Aorta (tissue), 5 donors: ENCODE measurements at regions of chr11 and their contacts with region 1.

Region 1: DNA sequence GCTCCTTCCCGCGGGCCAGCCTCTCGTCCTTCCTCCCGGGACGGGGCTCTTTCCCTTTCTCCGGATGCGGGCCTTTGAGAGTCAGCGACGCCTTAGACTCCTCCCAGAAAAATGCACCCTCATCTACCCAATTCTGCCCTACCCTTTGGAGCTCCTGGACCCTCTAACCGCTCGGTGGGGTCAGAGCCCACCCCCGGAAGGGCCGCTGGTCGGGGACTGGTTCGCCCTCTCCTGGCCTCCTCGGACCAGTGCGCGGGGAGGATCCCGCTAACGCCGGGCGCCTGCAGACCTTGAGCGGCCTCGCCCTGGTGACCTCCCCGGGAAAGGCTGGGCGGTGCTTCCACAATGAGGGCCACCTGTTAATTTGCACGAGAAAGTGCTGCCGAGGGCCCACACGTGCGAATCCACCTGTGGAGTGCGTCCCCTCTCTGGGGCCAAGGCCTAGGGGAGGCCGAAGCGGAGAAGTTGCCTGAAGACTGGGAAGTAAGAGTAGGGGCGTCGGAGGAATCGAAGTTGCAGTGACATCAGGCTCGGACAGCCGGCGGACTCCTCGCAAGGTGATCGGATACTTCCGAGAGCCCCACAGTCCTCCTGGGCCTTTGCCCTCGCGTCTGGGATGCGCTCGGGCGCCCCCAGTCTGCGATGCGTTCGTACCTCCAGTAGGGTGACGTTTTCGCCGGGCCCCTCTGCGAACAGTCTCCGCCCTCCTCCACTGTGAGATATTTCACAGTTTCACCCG is 61.5 kb downstream of the ENDOD1 start:
- DNase-seq: peak; percentile 94 to 95
- ATAC-seq: peak; percentile 95
- H3K4me3 ChIP-seq: peak overlapping the region; percentile 7 to 32
- H3K27ac ChIP-seq: peak overlapping the region in 1 of 2 donors; percentile 82
- H3K4me1 ChIP-seq: no peaks in the 10 kb centered on the region
- H3K27me3 ChIP-seq: no peaks in the 10 kb centered on the region

Region 2: DNA sequence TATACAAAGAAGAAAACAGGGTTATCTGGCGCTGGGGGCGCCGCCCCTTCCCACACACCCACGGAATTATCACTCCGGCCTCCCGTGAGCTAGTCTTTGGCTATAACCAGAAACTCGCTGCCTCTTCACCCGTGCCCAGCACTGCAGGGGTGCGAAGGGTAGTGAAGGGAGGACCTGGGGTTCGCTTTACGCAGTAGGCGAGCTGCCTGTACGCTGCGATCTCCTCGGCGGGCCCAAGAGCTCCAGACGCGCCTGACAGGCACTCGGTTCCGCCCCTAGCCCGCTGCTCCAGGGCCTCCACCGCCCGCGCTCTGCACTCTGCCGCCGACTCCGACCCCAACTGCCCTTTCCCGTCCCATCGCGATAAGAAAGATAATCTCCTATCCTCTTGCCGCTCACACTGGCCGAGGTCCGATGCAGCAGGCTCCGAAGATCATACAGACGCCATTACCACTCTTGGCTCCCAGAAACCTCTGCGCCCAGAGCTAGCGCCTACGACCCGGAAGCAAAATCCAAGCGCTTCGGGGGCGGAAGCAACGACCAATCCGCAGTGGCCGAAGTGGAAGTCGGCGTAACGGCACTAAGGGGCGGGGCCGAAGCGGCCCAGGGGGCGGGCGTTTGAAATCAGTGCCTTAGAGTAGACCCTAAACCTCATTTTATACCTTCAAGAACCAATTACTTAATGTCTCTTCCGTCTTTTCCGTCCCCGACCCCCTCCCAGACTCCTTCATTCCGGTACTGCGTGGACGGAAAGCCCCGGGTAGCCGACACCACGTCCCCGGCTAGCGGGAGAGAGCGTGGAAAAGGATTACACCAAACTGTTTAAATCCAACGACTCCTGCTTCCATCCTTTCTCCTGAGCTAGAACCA is 177.8 kb before region 1 on chr11 and contains the starts of genes CWC15 and KDM4D:
- intact Hi-C with region 1: loop called (anchors 10 kb)
- DNase-seq: peak; percentile 97 to 98
- ATAC-seq: peak; percentile 99
- H3K4me3 ChIP-seq: peak within 1 kb of the TSS; percentile 71 to 96
- H3K27ac ChIP-seq: peak within 1 kb of the TSS in 1 of 2 donors; percentile 70
- H3K4me1 ChIP-seq: no peaks in the 10 kb centered on the region
- H3K27me3 ChIP-seq: no peaks in the 10 kb centered on the region
- total RNA-seq, gene CWC15: 49.7 to 54.7 TPM
- total RNA-seq, gene KDM4D: 0.45 to 0.75 TPM

Region 3: DNA sequence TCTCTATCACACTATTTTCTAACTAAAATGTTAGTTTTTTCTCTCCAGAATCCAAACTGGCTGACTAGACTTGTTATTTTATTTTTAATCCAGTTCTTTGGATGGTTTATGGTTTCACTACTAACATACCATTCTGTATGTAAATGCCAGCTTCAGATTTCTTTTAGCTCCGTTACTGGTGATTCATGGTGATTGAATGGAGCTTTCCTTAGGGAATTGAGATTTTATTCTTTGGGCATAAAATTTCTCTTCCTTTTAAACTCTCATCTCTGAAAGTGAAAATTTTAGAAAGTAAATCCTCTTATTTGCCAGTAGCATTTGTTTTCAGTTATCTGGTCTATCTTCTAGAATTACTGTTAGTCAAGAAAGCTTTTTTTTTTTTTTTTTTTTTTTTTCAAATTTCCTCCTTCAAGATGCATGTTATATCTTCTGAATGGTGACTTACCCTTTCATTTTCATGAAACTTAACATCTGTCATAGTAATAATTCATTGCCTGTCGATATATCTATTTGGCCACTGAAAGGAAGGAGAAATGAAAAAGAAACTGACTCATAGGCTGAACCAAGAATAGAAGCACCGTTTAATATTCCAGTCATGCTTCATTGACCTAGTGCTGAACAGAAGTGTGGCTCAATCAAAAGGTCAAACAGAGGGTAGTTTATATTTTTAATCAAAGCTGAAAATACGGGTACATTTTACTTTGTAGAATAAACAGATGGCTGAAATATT is 55.1 kb before region 1 on chr11:
- intact Hi-C with region 1: loop called in 1 of 2 experiments (anchors 5 kb)
- DNase-seq: no peak
- ATAC-seq: no peak
- H3K4me3 ChIP-seq: no peak overlapping the region
- H3K27ac ChIP-seq: no peak overlapping the region
- H3K4me1 ChIP-seq: peaks cover 0 to 6% of the 10 kb centered on the region in 2 donors
- H3K27me3 ChIP-seq: no peaks in the 10 kb centered on the region

Region 4: GRCh38 chr11:95231127-95231880 is 80.2 kb after region 1 on chr11 and contains the start of gene SESN3:
- intact Hi-C with region 1: loop called in 1 of 2 experiments (anchors 1 kb)
- DNase-seq: peak; percentile 100
- ATAC-seq: peak; percentile 98
- H3K4me3 ChIP-seq: peak within 1 kb of the TSS; percentile 66 to 86
- H3K27ac ChIP-seq: peak within 1 kb of the TSS; percentile 90 to 91
- H3K4me1 ChIP-seq: peaks cover 0 to 7% of the 10 kb centered on the region in 2 donors
- H3K27me3 ChIP-seq: no peaks in the 10 kb centered on the region
- total RNA-seq, gene SESN3: 34.9 to 64.5 TPM

Region 5: DNA sequence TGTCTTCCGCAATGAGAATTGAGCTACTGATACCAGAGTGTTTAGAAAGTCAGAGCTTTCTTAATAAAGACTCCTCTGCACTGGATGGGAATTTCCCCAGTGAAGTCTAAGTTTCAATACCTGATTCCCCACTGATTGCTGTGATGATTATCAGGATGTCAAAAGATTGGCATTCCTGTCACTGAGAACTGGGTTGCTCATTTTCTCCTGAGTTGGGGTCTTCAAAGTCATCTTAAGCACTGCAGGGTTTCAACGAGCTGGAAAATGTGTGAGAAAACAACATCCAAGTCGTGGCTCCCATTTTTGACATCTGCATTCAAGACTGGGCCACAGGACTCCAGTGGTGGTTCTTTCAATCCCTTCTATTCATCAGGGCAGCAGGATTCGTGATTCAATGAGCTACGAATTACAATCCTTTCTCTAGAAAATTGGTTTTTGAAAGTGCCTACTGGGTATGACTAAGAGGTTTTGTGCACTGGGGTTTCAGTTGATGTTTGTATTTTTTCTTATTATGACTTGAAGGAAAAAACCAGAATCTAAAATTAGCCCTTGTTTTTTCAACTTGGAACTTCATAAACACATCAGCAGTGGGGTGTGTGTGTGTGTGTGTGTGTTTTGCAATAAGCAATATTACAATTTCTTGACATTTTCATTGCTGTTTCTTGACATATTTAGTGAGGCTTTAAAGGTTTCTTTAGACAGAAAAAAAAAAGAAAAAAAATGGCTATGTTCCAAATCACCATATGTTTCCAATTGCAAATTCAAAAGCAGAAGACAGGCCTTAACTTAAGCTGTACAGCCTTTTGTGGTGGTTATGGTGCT is 405.4 kb after region 1 on chr11:
- intact Hi-C with region 1: loop called in 1 of 2 experiments (anchors 10 kb)
- DNase-seq: no peak
- ATAC-seq: no peak
- H3K4me3 ChIP-seq: no peak overlapping the region
- H3K27ac ChIP-seq: peak overlapping the region in 1 of 2 donors; percentile 67
- H3K4me1 ChIP-seq: peaks cover 0 to 3% of the 10 kb centered on the region in 2 donors
- H3K27me3 ChIP-seq: no peaks in the 10 kb centered on the region

Region 6: DNA sequence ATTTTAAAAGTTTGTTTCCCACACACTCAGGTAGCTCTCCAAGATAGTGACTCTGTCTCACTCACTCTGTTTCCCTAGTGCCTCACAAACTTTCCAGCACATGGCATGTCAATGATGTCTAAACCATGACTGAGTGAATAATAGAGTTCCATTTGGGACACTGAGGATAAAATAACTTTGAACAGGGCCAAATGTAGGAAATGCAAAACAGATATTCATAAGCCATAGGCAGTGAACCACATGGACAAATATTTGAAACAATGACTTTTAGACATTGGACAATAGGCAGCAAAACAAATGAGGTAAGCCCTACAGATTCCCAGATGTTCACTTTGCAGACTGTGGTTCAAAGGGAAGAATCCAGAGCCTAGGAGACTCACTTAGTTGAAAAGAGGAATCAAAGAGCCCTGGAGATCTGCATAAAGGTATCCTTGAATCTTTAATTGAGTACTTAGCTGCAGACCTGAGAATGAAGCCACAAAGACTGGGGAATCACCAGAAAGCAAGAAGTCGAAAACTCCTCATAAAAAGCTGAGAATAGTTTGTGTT is 465.2 kb after region 1 on chr11:
- intact Hi-C with region 1: no loop called
- DNase-seq: no peak
- ATAC-seq: no peak
- H3K4me3 ChIP-seq: no peak overlapping the region
- H3K27ac ChIP-seq: no peak overlapping the region
- H3K4me1 ChIP-seq: no peaks in the 10 kb centered on the region
- H3K27me3 ChIP-seq: no peaks in the 10 kb centered on the region

Region 7: DNA sequence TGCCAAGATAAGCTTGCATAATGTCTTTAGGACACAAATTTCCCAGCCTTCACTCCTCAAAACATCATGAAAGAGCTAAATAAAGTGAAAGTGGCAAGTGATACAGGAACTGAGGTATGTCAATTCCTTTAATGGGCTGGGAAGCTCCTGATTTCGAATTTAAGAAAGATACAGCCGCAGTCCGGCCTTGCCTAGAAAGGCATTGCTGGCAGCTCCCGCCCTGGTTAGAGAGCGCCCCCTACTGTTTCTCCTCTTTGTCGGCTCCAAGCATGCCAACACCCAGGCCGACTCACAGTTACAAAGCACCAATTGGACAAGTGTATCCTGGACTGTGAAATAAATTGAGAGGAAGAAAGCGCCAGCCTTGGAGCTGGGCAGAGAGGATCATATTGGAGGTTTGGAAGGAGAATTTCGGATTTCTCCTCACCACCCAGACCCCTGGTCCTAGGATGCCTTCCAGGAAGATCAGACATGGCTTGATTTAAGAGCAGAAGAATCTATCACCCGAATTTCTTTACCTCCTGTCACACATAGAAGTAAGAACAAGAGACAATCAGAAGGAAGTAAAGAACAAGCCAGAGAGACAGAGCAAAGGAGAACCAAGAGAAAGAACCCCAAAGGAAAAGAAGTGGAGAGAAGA is 554.5 kb after region 1 on chr11:
- intact Hi-C with region 1: loop called (anchors 1 to 5 kb)
- DNase-seq: peak; percentile 91 to 92
- ATAC-seq: peak; percentile 96
- H3K4me3 ChIP-seq: no peak overlapping the region
- H3K27ac ChIP-seq: peak overlapping the region; percentile 28 to 72
- H3K4me1 ChIP-seq: peaks cover 0 to 4% of the 10 kb centered on the region in 2 donors
- H3K27me3 ChIP-seq: no peaks in the 10 kb centered on the region